ENCODE measurements at regions of chr11 and their contacts with region 1.

Region 1: DNA sequence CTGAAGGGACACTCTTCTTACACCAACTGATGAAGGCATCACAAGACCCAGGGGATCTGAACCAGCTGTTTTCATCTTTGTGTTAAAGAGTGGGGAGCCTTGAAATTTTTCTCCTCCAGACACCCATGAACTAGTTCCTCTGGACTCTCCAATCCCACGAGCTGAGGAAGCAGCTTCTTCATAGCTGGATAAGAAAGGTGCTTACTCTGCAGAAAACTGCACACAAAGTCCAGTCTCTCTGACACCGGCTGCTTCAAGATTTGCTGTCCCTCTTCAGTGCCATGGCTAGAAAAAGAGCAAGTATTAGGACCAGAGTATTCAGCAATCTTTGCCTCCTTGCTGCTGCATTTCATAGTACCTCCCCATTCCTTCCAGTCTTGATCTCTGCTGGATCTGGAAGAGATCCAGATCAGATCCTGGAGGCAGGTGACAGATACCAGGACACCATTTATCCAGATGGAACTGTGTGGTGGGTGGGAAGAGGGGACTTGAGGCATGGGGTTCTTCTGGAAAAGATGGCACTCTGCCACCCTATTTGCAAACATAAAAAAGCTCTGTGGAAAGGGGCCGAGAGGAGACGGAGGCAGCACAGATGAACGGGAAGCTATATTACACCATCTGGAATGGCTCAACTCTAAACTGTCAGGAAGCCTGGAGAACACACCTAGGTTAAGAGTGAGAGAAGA is 25.5 kb downstream of the IL18BP start:
- DNase-seq: no peak
- ATAC-seq: no peak
- H3K4me3 ChIP-seq: no peak overlapping the region
- H3K4me3 Mint-ChIP-seq: no peak overlapping the region
- H3K27ac ChIP-seq: no peak overlapping the region
- H3K27ac Mint-ChIP-seq: peak overlapping the region; percentile 81
- H3K4me1 ChIP-seq: peaks cover 20% of the 10 kb centered on the region
- H3K4me1 Mint-ChIP-seq: peaks cover 43% of the 10 kb centered on the region
- H3K27me3 ChIP-seq: no peaks in the 10 kb centered on the region
- H3K27me3 Mint-ChIP-seq: no peaks in the 10 kb centered on the region
- CTCF ChIP-seq: no peak

Region 2: DNA sequence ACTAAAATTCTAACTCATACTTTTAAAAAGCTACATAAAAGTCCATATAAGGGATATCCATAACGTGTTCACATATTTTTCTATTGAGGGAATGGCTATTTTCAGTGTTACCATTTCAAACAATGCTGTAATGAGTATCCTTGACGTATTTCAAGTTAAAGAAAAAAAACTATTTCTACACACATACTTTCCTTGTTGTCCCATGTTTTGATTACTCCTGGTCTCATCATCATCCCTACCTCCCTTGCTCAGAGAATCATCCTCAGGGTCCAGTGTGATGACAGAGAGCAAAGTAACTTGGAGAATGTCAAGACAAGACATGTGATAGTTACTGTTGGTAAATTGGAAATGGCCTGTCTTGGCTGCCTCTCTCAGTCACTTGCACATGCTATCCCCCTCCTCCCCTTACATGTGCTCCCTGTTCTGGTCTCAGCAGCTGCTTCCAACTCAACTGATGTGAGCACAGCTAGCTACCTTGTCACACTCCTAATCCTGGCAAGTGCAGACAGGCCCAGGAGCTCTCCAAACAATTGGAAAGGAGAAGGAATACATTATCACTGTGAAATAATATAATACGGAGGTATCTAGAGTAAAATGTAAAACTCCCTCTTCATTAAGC is 34.3 kb after region 1 on chr11:
- CTCF ChIA-PET with region 1: interaction called, 10 read pairs
- POLR2A ChIA-PET with region 1: no interaction called
- intact Hi-C with region 1: no loop called
- DNase-seq: no peak
- ATAC-seq: no peak
- H3K4me3 ChIP-seq: no peak overlapping the region
- H3K4me3 Mint-ChIP-seq: no peak overlapping the region
- H3K27ac ChIP-seq: no peak overlapping the region
- H3K27ac Mint-ChIP-seq: no peak overlapping the region
- H3K4me1 ChIP-seq: no peaks in the 10 kb centered on the region
- H3K4me1 Mint-ChIP-seq: no peaks in the 10 kb centered on the region
- H3K27me3 ChIP-seq: no peaks in the 10 kb centered on the region
- H3K27me3 Mint-ChIP-seq: no peaks in the 10 kb centered on the region
- CTCF ChIP-seq: no peak

Region 3: DNA sequence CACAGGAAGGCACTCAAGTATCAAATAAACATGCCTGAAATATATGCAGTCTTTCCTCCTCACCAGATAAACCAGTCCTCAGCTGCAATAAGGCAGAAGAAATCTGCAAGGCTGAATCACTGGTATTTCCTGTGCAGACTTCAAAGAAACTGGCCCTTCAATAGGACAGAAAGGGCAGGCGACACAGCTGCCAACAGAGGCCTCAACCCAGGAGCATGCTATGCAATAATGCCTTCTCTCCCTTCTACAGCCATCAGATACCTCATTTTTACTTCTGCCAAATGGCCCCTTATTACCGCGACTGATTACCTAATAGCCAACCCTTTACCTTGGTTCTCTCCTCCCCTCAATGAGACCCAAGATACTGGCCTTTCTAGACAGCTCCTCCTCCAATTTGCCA is 48.1 kb after region 1 on chr11:
- CTCF ChIA-PET with region 1: interaction called, 14 read pairs
- POLR2A ChIA-PET with region 1: no interaction called
- intact Hi-C with region 1: no loop called
- DNase-seq: peak in 1 of 14 experiments; percentile 25
- ATAC-seq: no peak
- H3K4me3 ChIP-seq: no peak overlapping the region
- H3K4me3 Mint-ChIP-seq: no peak overlapping the region
- H3K27ac ChIP-seq: no peak overlapping the region
- H3K27ac Mint-ChIP-seq: no peak overlapping the region
- H3K4me1 ChIP-seq: peaks cover 18% of the 10 kb centered on the region
- H3K4me1 Mint-ChIP-seq: peaks cover 37% of the 10 kb centered on the region
- H3K27me3 ChIP-seq: no peaks in the 10 kb centered on the region
- H3K27me3 Mint-ChIP-seq: no peaks in the 10 kb centered on the region
- CTCF ChIP-seq: no peak

Region 4: DNA sequence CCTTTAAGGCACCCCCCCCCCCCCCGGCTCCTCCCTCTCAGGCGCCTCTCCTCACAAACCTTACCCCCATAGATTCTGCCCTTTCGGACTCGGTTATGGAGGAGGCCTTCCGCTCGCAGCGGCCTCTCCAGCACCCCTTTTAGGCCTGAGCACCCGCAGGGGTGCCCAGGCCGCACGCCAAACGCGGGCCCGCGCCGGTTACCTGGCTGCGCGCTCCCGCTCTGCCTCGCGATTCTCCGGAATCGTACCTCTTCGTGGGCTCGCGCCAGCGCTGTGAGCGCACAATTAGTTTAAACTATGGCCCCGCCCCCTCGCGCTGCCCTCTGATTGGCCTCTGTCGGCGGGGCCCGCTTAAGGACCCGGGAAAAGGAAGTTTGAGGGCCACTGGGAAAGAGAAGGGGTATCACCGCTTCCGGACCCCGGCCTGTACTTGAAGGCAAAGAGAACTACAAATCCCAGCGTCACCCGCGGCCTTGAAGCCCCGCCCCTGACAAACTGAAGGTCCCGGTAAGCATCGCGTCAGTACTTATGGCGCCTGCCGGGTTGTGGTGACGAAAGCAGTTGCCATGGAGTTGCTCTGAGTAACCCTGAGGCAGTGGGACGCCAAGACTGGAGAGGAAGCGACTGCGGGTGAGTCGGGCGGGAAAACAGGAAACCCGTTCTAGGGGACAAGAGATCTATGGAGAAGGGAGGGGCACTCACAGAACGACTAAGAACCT is 56.2 kb after region 1 on chr11 and contains the starts of genes LRRC51 and NUMA1:
- CTCF ChIA-PET with region 1: interaction called, 31 read pairs
- POLR2A ChIA-PET with region 1: interaction called, 6 read pairs
- intact Hi-C with region 1: no loop called
- DNase-seq: peak; percentile 97 to 100 (median 99)
- ATAC-seq: peak; percentile 84
- H3K4me3 ChIP-seq: peak within 1 kb of the TSS; percentile 73
- H3K4me3 Mint-ChIP-seq: peak within 1 kb of the TSS; percentile 95
- H3K27ac ChIP-seq: peak within 1 kb of the TSS; percentile 82 to 93
- H3K27ac Mint-ChIP-seq: peak within 1 kb of the TSS; percentile 92
- H3K4me1 ChIP-seq: peaks cover 31% of the 10 kb centered on the region
- H3K4me1 Mint-ChIP-seq: peaks cover 41% of the 10 kb centered on the region
- H3K27me3 ChIP-seq: no peaks in the 10 kb centered on the region
- H3K27me3 Mint-ChIP-seq: no peaks in the 10 kb centered on the region
- CTCF ChIP-seq: no peak
- total RNA-seq, gene LRRC51: 0.87 to 1.1 TPM
- total RNA-seq, gene NUMA1: 191 to 197 TPM